Natural killer cell (primary cell): ENCODE measurements at regions of chr6 and their contacts with region 1.

Region 1: GRCh38 chr6:28895134-28895812 is 28.5 kb downstream of the TRIM27 start:
- DNase-seq: peak; percentile 84 to 96
- ATAC-seq: peak; percentile 66 to 84 (median 74)
- H3K4me3 ChIP-seq: peak overlapping the region; percentile 72
- H3K4me3 Mint-ChIP-seq: peak overlapping the region; percentile 97
- H3K27ac ChIP-seq: peak overlapping the region; percentile 96
- H3K27ac Mint-ChIP-seq: peak overlapping the region; percentile 99
- H3K4me1 ChIP-seq: peaks cover 13% of the 10 kb centered on the region
- H3K4me1 Mint-ChIP-seq: peaks cover 24 to 25% of the 10 kb centered on the region in 2 donors
- H3K27me3 ChIP-seq: no peaks in the 10 kb centered on the region
- H3K27me3 Mint-ChIP-seq: no peaks in the 10 kb centered on the region
- CTCF ChIP-seq: no peak

Region 2: DNA sequence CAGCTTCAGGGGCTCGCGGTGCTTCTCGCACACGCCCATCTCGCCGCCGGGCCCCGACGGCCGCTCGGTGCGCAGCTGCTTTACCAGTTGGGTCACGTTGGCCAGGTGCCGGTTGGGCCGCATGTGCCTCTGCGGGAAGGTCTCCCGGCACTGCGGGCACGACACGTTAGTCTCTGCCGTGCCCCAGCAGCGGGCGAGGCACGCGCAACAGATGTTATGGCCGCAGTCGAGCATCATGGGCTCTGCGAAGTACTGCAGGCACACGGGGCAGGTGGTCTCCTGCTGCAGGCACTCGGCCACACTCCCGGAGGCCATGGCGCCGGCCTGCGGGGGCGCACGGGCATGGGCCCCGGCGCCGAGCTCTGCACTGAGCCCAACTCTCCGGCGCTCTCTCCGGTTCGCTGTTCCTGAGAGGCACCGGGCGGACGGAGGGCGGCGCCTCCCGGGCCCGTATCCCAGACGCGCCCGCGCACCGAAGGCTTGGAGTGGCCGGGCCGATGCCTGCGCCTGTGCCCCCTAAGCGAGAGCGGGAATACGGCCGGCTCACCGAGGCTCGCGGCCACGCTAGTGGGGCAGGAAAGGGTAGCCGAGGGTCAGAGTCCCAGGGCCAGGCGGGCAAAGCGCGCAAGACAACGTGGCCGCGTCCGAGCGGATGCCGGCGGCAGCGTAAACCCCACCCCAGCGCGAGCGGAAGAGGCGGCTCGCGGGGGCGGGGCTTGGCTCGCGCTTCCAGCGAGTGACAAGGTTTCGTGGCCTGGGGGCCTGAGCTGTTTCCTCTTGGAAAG is 28.2 kb after region 1 on chr6 and contains the start of gene TRIM27:
- intact Hi-C with region 1: loop called (anchors 2 kb)
- DNase-seq: peak; percentile 81 to 89
- ATAC-seq: peak; percentile 86 to 93 (median 90)
- H3K4me3 ChIP-seq: peak within 1 kb of the TSS; percentile 81
- H3K4me3 Mint-ChIP-seq: peak within 1 kb of the TSS; percentile 96
- H3K27ac ChIP-seq: peak within 1 kb of the TSS; percentile 84
- H3K27ac Mint-ChIP-seq: peak within 1 kb of the TSS; percentile 86 to 92
- H3K4me1 ChIP-seq: peaks cover 15% of the 10 kb centered on the region
- H3K4me1 Mint-ChIP-seq: peaks cover 32 to 37% of the 10 kb centered on the region in 2 donors
- H3K27me3 ChIP-seq: no peaks in the 10 kb centered on the region
- H3K27me3 Mint-ChIP-seq: peaks cover 0 to 2% of the 10 kb centered on the region in 2 donors
- CTCF ChIP-seq: no peak
- total RNA-seq, gene TRIM27: 19.3 to 33.6 (median 25.1) TPM